ENCODE measurements at regions of chrX and their contacts with region 1.

Region 1: DNA sequence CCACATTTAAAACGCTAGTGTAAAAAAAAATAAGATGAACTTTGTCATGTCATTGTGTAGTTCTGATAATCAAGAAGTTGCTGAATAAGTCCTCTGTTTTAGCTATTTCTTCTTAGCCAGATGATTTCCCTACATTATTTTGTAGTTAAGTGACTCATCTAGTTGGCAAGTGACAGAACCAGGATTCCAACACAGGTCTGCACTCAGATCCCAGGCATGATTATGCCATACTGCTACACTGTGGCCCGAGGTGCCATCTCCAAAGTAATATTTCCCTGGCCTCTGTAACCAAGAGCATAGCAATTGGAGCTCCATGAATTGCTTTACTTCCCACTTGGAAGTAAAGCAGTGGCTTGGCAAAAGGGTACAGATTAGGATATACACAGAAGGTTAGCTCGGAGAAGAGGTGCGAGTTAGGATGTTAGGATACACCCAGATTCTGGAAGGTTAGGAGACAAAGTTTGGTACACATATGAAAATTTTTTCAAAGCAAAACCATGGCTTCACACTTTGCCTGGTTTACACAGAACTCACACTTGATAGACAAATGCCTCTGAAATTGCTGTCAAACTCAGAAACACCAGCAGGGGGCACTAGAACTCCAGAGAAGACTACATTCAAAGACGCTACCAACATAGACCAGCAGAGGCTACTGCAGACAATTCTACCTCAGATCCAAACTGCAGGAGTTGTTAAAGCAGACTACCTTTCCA is 41.4 kb downstream of the SRPX2 start:
- DNase-seq: peak; percentile 43 to 68 (median 66)
- H3K4me3 ChIP-seq: no peak overlapping the region
- H3K4me3 Mint-ChIP-seq: no peak overlapping the region
- H3K27ac ChIP-seq: no peak overlapping the region
- H3K27ac Mint-ChIP-seq: no peak overlapping the region
- H3K4me1 ChIP-seq: no peaks in the 10 kb centered on the region
- H3K4me1 Mint-ChIP-seq: peaks cover 0 to 2% (median 0%) of the 10 kb centered on the region in 4 donors
- H3K27me3 ChIP-seq: no peaks in the 10 kb centered on the region
- H3K27me3 Mint-ChIP-seq: peaks cover 0 to 3% of the 10 kb centered on the region in 2 donors

Region 2: GRCh38 chrX:100674705-100675104 is 10.7 kb before region 1 on chrX:
- CTCF ChIA-PET with region 1: interaction called, 16 read pairs
- POLR2A ChIA-PET with region 1: no interaction called
- intact Hi-C with region 1: no loop called
- DNase-seq: no peak
- H3K4me3 ChIP-seq: no peak overlapping the region
- H3K4me3 Mint-ChIP-seq: peak overlapping the region in 6 of 8 donors; percentile 3 to 55 (median 18)
- H3K27ac ChIP-seq: no peak overlapping the region
- H3K27ac Mint-ChIP-seq: peak overlapping the region in 3 of 7 donors; percentile 2 to 42 (median 41)
- H3K4me1 ChIP-seq: peaks cover 19% of the 10 kb centered on the region
- H3K4me1 Mint-ChIP-seq: peaks cover 13 to 19% (median 17%) of the 10 kb centered on the region in 4 donors
- H3K27me3 ChIP-seq: no peaks in the 10 kb centered on the region
- H3K27me3 Mint-ChIP-seq: no peaks in the 10 kb centered on the region

Region 3: DNA sequence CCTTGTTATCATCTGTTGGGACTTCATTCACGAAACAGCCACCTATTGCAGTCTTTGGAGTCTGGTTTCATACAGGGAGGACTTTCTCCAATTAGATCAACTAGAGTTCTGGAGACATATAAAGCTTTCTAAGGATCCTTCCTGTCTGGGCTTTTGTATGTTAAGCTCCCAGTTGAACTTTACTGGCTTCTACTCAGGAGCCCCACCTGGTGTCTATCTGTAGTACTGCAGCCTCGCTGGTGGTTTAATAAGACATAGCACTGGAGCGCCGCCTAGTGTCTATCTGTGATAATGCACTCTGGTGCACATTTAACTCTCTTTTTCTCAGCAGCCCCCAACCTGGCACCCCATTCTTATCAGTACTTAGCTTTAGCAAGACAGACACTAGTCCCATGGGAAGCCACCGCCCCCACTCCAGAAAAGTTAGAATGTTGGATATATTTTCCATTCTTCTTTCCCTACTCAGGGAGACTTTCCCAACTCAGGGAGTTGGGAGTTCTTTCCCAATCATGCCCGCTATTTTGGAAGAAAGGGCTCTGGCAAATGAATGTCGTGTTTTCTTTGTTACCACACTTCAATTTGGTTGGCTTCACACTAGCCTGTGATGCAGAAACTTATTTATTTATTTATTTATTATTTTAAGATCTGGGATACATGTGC is 83.4 kb after region 1 on chrX:
- CTCF ChIA-PET with region 1: interaction called, 54 read pairs
- POLR2A ChIA-PET with region 1: no interaction called
- intact Hi-C with region 1: loop called (anchors 1 kb)
- DNase-seq: peak; percentile 79 to 82 (median 80)
- H3K4me3 ChIP-seq: no peak overlapping the region
- H3K4me3 Mint-ChIP-seq: no peak overlapping the region
- H3K27ac ChIP-seq: no peak overlapping the region
- H3K27ac Mint-ChIP-seq: no peak overlapping the region
- H3K4me1 ChIP-seq: no peaks in the 10 kb centered on the region
- H3K4me1 Mint-ChIP-seq: no peaks in the 10 kb centered on the region
- H3K27me3 ChIP-seq: no peaks in the 10 kb centered on the region
- H3K27me3 Mint-ChIP-seq: peaks cover 0 to 1% of the 10 kb centered on the region in 2 donors

Region 4: GRCh38 chrX:101206471-101206870 is 521.0 kb after region 1 on chrX:
- CTCF ChIA-PET with region 1: no interaction called
- POLR2A ChIA-PET with region 1: no interaction called
- intact Hi-C with region 1: loop called (anchors 5 kb)
- DNase-seq: peak in 2 of 5 donors; percentile 9 to 13
- H3K4me3 ChIP-seq: no peak overlapping the region
- H3K4me3 Mint-ChIP-seq: no peak overlapping the region
- H3K27ac ChIP-seq: no peak overlapping the region
- H3K27ac Mint-ChIP-seq: no peak overlapping the region
- H3K4me1 ChIP-seq: peaks cover 17% of the 10 kb centered on the region
- H3K4me1 Mint-ChIP-seq: peaks cover 9 to 17% (median 14%) of the 10 kb centered on the region in 4 donors
- H3K27me3 ChIP-seq: no peaks in the 10 kb centered on the region
- H3K27me3 Mint-ChIP-seq: no peaks in the 10 kb centered on the region

Measured in CD4-positive, alpha-beta memory T cell (primary cell).